RWPE1 (cell line): ENCODE measurements at regions of chr20 and their contacts with region 1.

Region 1: DNA sequence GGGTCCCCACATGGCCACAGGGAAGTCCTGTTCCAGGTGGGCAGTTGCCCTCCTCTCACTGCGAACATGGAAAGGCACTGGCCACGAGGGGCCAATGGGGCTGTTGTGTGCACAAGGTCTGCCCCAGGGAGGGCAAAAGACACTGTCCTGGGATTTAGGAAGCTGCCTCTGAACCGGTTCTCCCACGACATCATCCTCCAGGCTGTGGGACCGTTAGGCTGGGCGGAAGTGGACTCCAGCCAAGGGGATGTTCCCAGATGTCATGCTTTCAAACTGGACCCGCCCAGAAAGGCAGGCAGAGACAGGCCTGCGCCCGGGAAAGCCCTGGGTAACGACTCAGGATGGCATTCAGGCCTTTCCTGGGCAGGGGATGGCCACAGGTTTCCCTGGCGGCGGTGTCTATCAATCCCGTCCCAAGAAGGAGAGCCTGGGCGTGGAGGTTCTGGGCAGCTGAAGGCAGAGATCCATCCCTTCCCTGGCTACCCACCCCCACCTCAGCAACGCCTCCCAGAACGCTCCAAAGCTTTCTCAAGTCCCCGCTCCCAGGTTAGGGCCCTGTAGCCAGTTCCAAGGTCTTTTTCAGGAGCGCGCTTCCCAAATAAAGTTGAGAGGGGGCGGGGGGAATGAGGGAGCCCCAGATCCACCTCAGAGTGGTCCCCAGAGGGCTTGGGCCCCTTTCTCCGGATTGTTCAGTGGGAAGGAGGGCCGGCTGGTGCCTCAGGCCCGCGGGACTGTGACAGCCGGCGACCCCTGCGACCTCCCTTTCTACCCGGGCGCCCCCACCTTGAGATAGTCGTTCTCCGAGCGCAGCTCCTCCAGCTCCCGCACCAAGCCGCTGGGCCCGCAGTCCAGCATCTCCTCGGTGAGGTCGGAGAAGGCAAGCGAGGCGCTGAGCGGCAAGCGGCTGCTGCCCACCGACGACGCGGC is 13.8 kb upstream of the TLDC2 start:
- DNase-seq: peak; percentile 100
- H3K27ac ChIP-seq: peak overlapping the region; percentile 99
- CTCF ChIP-seq: no peak

Region 2: DNA sequence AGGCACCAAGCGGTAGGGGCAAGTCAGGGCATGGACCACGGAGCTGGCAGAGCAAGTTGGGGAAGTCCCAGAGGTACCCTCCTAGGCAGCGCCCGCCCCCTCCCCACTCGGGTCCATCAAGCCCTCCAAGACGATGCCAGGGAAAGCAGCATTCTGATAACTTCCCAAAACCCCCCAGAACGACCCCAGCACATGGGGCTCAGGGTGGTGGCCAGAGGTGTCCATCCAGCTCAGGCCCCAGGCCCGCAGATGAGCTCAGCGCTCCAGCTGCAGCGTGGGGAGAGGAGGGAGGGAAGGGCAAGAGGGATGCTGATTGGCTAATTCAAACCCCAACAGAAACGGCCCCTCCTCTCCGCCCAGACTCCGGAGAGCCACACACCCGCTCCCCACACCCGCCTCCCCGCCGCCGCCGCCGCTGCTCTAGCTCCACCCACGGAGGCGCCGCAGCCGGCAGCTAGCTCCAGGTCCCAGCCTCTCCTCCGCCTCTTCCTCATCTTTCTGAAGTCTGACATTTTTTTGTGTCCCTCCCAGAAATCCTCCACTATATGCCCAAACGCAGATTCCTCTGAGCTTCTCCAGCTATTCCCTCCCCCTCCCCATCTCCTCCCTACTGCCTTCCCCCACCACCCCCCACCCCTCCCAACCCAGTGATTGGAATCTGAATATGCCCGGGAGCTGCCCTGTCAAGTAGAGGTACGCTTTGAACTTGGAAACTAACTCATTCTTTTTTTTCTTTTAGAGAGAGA is 26.5 kb before region 1 on chr20:
- CTCF ChIA-PET with region 1: interaction called, 12 read pairs
- POLR2A ChIA-PET with region 1: interaction called, 6 read pairs
- DNase-seq: peak; percentile 100
- H3K27ac ChIP-seq: peak overlapping the region; percentile 97
- CTCF ChIP-seq: no peak

Region 3: DNA sequence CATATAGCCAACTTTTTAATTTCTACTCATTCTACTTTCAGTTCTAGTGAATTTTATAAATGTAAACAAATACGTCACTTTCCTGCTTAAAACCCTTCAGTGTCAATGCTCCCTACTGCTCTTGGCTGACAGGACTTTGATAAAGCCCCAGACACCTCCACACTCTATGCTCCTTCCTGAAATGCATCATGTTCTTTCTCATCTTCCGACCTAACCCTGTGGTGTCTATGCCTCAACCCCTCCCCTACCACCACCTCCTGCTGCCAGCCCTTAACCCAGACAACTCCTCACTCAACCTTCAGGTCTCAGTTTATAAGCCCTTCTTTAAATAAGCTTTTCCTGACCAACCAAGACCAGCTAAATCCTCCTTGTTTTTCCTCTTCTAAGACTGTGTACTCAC is 32.9 kb after region 1 on chr20:
- CTCF ChIA-PET with region 1: no interaction called
- POLR2A ChIA-PET with region 1: no interaction called
- DNase-seq: no peak
- H3K27ac ChIP-seq: no peak overlapping the region
- CTCF ChIP-seq: no peak